Endothelial cell of umbilical vein (primary cell): ENCODE measurements at regions of chr6 and their contacts with region 1.

Region 1: DNA sequence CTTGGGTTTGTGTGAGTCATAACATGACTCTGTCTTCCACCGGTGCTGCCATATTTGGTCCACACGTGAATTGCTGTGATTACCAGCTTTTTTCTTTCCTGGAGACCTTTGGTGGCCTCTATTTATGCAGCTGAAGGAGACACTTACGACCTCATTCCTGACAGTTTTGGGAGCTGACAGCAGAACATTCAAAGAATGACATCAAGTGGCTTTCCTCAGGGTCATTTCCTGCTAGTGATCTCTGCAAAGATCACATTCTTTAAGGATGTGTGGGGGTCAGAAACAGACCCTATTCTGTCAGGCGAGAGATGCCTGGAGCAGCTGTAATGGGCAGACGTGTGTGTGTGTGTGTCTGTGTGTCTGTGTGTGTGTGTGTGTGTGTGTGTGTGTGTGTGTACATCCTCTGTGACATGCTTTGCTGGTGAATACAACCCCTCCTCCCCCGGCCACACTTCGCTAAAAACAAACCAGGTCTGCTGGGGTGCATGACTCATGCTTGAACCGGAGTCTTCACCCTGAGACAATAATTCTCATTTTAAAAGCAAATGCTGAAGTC is 115.6 kb downstream of the TMEM170B start:
- DNase-seq: peak; percentile 97
- H3K4me3 ChIP-seq: no peak overlapping the region
- H3K27ac ChIP-seq: peak overlapping the region; percentile 99
- H3K4me1 ChIP-seq: peaks cover 66% of the 10 kb centered on the region
- H3K27me3 ChIP-seq: no peaks in the 10 kb centered on the region
- CTCF ChIP-seq: no peak
- POLR2A ChIP-seq: peak; percentile 71

Region 2: DNA sequence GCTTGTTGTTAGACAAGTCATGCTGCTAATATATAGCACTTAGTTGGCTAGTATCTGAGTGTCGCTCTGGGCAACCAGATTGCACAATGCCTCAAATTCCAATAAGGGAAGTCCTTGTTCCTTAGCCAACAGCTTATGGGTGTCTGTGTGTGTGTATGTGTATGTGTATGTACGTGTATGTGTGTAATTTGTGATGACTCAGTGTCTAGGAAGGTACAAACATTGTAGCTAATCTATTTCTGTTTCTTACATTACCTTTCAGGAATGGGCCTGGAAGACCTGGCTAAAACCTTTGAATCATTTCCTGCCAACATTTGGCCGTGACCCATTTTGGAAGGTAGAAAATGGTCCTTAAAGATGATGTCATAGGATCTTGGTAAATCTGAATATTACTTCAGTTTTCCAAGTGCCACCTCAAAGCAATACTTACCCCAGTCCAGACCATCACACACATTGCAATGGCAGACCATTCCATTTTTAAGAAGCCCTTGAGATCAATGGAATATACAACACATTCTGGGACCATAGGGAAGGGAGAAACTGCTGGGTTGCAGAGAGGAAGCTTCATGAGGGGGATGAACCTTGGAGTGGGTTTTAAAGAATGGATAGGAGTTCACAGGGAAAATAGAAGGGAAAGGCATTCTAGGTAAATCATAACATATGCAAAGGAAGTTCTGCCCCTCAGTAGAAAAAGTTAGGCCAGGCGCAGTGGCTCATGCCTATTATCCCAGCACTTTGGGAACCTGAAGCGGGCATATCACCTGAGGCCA is 445.7 kb before region 1 on chr6:
- CTCF ChIA-PET with region 1: no interaction called
- POLR2A ChIA-PET with region 1: no interaction called
- dilution Hi-C with region 1: no loop called
- intact Hi-C with region 1: loop called (anchors 2 kb)
- DNase-seq: peak; percentile 96
- H3K4me3 ChIP-seq: no peak overlapping the region
- H3K27ac ChIP-seq: peak overlapping the region; percentile 95
- H3K4me1 ChIP-seq: peaks cover 69% of the 10 kb centered on the region
- H3K27me3 ChIP-seq: no peaks in the 10 kb centered on the region
- CTCF ChIP-seq: no peak
- POLR2A ChIP-seq: peak; percentile 43

Region 3: GRCh38 chr6:11618533-11618932 is 34.6 kb before region 1 on chr6:
- CTCF ChIA-PET with region 1: interaction called, 102 read pairs
- POLR2A ChIA-PET with region 1: interaction called, 210 read pairs
- dilution Hi-C with region 1: no loop called
- intact Hi-C with region 1: loop called (anchors 1 kb)
- DNase-seq: peak; percentile 65
- H3K4me3 ChIP-seq: no peak overlapping the region
- H3K27ac ChIP-seq: peak overlapping the region; percentile 30
- H3K4me1 ChIP-seq: peaks cover 34% of the 10 kb centered on the region
- H3K27me3 ChIP-seq: no peaks in the 10 kb centered on the region
- CTCF ChIP-seq: peak; percentile 14 to 26
- POLR2A ChIP-seq: no peak

Region 4: DNA sequence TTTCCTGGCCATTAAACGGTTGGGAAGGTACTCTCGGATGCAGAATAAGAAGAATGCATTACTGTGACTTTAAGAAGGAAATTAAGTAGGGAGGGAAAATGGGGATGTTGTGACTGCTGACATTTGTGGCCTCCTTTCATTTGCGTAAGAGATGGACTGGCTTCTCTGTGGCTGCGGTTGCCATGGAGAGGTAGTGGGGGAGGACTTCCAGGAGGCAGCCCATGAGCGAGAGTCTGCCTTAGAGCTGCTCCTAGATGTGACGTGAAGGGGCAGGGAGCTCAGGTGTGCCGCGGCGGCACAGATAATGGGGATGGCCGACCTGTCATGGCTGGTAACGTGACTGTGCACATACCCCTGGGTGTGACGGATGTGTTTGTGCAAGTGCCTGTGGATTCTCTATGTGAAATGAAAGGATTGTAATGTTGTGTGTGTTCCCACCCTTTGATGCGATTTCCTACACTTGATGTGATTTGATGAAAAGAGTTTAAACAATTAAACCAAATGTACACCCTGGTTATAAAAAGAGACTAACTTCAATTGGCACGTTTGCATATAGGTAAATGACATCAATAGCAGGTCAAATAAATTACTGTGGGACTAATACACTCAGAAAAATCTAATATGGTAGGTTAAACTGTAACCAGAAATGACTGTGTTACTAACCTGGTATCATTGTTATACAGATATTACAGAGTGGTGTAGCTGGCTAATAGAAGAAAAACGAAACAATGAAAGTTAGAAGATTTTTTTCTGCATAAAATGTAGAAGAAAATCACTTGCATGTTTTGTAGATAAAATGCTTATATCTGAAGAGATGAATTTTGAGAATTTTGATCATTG is 407.9 kb after region 1 on chr6:
- CTCF ChIA-PET with region 1: interaction called, 11 read pairs
- POLR2A ChIA-PET with region 1: no interaction called
- dilution Hi-C with region 1: no loop called
- intact Hi-C with region 1: no loop called
- DNase-seq: no peak
- H3K4me3 ChIP-seq: no peak overlapping the region
- H3K27ac ChIP-seq: no peak overlapping the region
- H3K4me1 ChIP-seq: peaks cover 4% of the 10 kb centered on the region
- H3K27me3 ChIP-seq: no peaks in the 10 kb centered on the region
- CTCF ChIP-seq: no peak
- POLR2A ChIP-seq: no peak

Region 5: GRCh38 chr6:12289933-12290820 is 637.1 kb after region 1 on chr6 and contains the start of gene EDN1:
- CTCF ChIA-PET with region 1: interaction called, 89 read pairs
- POLR2A ChIA-PET with region 1: interaction called, 125 read pairs
- dilution Hi-C with region 1: no loop called
- intact Hi-C with region 1: loop called (anchors 1 kb)
- DNase-seq: peak; percentile 100
- H3K4me3 ChIP-seq: peak within 1 kb of the TSS; percentile 91 to 98 (median 96)
- H3K27ac ChIP-seq: peak within 1 kb of the TSS; percentile 98
- H3K4me1 ChIP-seq: peaks cover 26% of the 10 kb centered on the region
- H3K27me3 ChIP-seq: no peaks in the 10 kb centered on the region
- CTCF ChIP-seq: no peak
- POLR2A ChIP-seq: peak; percentile 100
- total RNA-seq, gene EDN1: 493 and 514 TPM in 2 replicates

Region 6: GRCh38 chr6:12490904-12491571 is 837.9 kb after region 1 on chr6:
- CTCF ChIA-PET with region 1: no interaction called
- POLR2A ChIA-PET with region 1: no interaction called
- dilution Hi-C with region 1: no loop called
- intact Hi-C with region 1: loop called (anchors 2 kb)
- DNase-seq: peak; percentile 96
- H3K4me3 ChIP-seq: no peak overlapping the region
- H3K27ac ChIP-seq: peak overlapping the region; percentile 93
- H3K4me1 ChIP-seq: peaks cover 39% of the 10 kb centered on the region
- H3K27me3 ChIP-seq: no peaks in the 10 kb centered on the region
- CTCF ChIP-seq: no peak
- POLR2A ChIP-seq: no peak

Region 7: GRCh38 chr6:12605888-12606345 is 952.8 kb after region 1 on chr6:
- CTCF ChIA-PET with region 1: interaction called, 8 read pairs
- POLR2A ChIA-PET with region 1: no interaction called
- dilution Hi-C with region 1: no loop called
- intact Hi-C with region 1: loop called (anchors 1 kb)
- DNase-seq: peak; percentile 81
- H3K4me3 ChIP-seq: no peak overlapping the region
- H3K27ac ChIP-seq: no peak overlapping the region
- H3K4me1 ChIP-seq: peaks cover 42% of the 10 kb centered on the region
- H3K27me3 ChIP-seq: no peaks in the 10 kb centered on the region
- CTCF ChIP-seq: peak; percentile 58 to 61
- POLR2A ChIP-seq: no peak